Ascending aorta (tissue), 2 donors: ENCODE measurements at regions of chr3 and their contacts with region 1.

Region 1: GRCh38 chr3:100047455-100048141 is 66.7 kb downstream of the FILIP1L start:
- DNase-seq: no peak
- H3K4me3 ChIP-seq: no peak overlapping the region
- H3K27ac ChIP-seq: peak overlapping the region; percentile 47 to 89
- H3K4me1 ChIP-seq: peaks cover 6 to 28% of the 10 kb centered on the region in 2 donors
- H3K27me3 ChIP-seq: no peaks in the 10 kb centered on the region
- CTCF ChIP-seq: no peak

Region 2: GRCh38 chr3:99866261-99866761 is 181.3 kb before region 1 on chr3:
- intact Hi-C with region 1: no loop called
- DNase-seq: no peak
- H3K4me3 ChIP-seq: peak overlapping the region; percentile 18 to 90
- H3K27ac ChIP-seq: peak overlapping the region; percentile 97 to 98
- H3K4me1 ChIP-seq: peaks cover 16 to 63% of the 10 kb centered on the region in 2 donors
- H3K27me3 ChIP-seq: no peaks in the 10 kb centered on the region
- CTCF ChIP-seq: no peak

Region 3: GRCh38 chr3:99895703-99896441 is 151.7 kb before region 1 on chr3:
- intact Hi-C with region 1: no loop called
- DNase-seq: no peak
- H3K4me3 ChIP-seq: no peak overlapping the region
- H3K27ac ChIP-seq: no peak overlapping the region
- H3K4me1 ChIP-seq: peaks cover 0 to 15% of the 10 kb centered on the region in 2 donors
- H3K27me3 ChIP-seq: no peaks in the 10 kb centered on the region
- CTCF ChIP-seq: no peak

Region 4: DNA sequence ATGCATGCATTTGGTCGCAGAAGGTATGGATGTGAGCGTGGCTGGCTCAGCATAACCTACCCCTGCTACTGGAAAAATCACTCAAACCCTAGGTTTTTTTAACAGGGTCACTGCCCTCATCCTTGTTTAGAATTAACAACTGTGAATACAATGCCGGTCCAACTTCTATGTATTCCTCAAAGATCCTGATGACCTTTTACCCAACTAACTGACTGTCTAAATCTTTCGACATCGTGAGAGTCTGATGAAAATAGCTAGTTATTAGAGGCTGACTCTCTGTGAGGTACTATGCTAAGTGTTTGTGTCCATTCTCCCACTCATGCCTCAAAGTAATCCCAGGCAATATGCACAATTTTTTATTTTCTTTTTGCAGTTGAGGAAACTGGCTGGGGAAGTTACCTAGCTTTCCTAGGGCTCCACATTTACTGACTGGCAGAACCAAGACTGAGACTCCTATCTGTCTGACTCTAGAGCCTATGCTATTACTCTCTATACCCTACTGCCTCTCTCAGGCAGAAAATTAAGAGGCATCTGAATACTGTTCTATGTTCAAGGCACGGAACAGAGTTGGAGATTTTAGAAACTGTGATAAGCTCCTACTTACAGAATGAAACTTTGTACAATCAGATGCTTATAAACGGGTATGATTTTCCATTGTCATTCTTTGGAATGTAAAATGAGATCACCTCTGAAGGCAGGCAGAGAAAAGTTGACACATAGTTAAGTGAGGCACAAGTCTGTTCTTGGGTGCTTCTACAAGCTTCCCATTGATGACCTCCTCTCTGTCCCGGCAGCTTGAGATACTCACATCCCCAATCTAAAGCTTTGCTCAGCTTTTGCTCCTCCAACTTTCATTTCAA is 10.3 kb after region 1 on chr3:
- intact Hi-C with region 1: loop called (anchors 2 kb)
- DNase-seq: no peak
- H3K4me3 ChIP-seq: no peak overlapping the region
- H3K27ac ChIP-seq: peak overlapping the region; percentile 22 to 37
- H3K4me1 ChIP-seq: peaks cover 0 to 17% of the 10 kb centered on the region in 2 donors
- H3K27me3 ChIP-seq: no peaks in the 10 kb centered on the region
- CTCF ChIP-seq: peak in 1 of 3 experiments; percentile 25